IMR-90 (cell line): ENCODE measurements at regions of chr15 and their contacts with region 1.

Region 1: DNA sequence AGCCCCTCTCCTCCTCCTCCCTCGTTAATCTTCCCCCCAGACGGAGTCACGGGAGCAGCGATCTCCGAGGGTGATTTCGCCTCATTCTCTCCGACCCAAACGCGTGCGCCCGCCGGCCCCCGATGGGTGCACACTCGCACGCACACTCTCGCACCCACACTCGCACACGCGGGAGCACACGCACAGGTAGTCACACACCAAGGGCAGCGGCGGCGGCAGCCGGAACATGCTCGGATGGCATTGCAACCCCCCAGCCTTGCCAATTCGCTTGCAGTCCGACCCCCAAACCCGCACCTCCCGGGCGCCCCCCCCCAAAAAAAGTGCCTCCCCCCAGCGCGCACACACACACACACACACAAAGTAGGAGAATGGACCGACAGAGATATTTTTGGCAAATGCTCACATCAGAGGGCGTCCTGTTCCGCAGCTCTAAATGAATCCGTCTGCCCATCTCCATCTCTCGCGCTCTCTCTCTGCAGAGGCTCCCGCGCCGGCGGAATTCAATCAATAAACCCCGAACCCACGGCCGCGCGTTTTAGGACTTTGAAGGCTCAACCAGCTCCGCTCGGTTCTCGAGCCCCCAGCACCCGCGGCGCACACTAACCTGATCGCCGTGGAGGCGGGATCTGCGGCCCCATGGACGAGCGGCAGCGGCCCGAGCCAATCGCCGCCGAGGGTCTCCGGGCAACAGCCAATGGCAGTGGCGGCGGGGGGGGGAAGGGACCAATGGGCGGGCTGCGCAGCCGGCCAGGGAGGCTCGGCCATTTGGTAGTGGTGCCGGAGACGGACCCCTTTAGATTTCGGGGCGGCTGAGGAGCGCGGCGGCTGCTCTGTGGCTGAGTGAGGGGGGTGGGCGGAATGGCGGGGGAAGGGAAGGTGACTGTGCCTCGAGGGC is at the start of gene ANP32A:
- DNase-seq: peak; percentile 91
- ATAC-seq: peak; percentile 79
- H3K4me3 ChIP-seq: peak within 1 kb of the TSS; percentile 78
- H3K27ac ChIP-seq: peak within 1 kb of the TSS; percentile 87
- H3K4me1 ChIP-seq: peaks cover 9% of the 10 kb centered on the region
- H3K27me3 ChIP-seq: no peaks in the 10 kb centered on the region
- CTCF ChIP-seq: no peak
- POLR2A ChIP-seq: no peak
- RAD21 ChIP-seq: no peak
- total RNA-seq, gene ANP32A: 50.0 and 72.8 TPM in 2 replicates

Region 2: GRCh38 chr15:68783226-68784058 is 37.1 kb before region 1 on chr15:
- CTCF ChIA-PET with region 1: no interaction called
- POLR2A ChIA-PET with region 1: no interaction called
- dilution Hi-C with region 1: no loop called
- in situ Hi-C with region 1: no loop called
- intact Hi-C with region 1: loop called (anchors 5 kb)
- DNase-seq: no peak
- ATAC-seq: no peak
- H3K4me3 ChIP-seq: no peak overlapping the region
- H3K27ac ChIP-seq: no peak overlapping the region
- H3K4me1 ChIP-seq: no peaks in the 10 kb centered on the region
- H3K27me3 ChIP-seq: no peaks in the 10 kb centered on the region
- CTCF ChIP-seq: peak; percentile 48
- POLR2A ChIP-seq: no peak
- RAD21 ChIP-seq: peak; percentile 54

Region 3: DNA sequence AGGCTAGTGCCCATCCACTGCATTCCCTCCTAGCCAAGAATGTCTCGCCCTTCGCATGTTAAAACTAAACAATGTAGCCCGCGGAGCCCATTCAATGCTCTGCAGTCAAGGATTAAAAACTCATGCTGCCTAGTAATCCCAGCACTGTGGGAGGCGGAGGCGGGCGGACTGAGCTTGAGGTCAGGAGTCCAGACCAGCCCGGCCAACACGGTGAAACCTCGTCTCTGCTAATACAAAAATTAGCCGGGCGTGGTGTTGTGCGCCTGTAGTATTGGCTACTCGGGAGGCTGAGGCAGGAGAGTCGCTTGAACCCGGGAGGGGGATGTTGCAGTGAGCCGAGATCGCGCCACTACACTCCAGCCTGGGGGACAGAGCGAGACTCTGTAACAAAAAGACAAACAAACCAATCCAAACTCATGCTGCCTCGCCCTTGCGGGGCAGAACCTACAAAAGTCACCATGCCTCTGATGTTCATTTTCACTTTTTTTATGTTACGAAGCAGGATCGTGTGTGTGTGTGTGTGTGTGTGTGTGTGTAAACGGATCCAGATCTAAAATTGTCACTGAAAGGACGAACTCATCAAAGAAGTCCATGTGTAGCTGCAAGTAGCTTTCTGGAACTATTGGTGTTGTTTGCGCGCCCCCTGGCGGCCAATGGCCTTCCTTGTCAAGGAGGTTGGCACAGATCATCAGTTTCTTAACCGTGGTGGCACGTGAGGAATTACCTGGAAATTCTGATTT is 55.0 kb after region 1 on chr15:
- CTCF ChIA-PET with region 1: no interaction called
- POLR2A ChIA-PET with region 1: no interaction called
- dilution Hi-C with region 1: no loop called
- in situ Hi-C with region 1: no loop called
- intact Hi-C with region 1: loop called (anchors 1 kb)
- DNase-seq: peak; percentile 88
- ATAC-seq: peak; percentile 92
- H3K4me3 ChIP-seq: peak overlapping the region; percentile 28
- H3K27ac ChIP-seq: no peak overlapping the region
- H3K4me1 ChIP-seq: no peaks in the 10 kb centered on the region
- H3K27me3 ChIP-seq: peaks cover 24% of the 10 kb centered on the region
- CTCF ChIP-seq: peak; percentile 92
- POLR2A ChIP-seq: no peak
- RAD21 ChIP-seq: peak; percentile 96

Region 4: GRCh38 chr15:68921926-68922325 is 101.4 kb after region 1 on chr15:
- CTCF ChIA-PET with region 1: no interaction called
- POLR2A ChIA-PET with region 1: no interaction called
- dilution Hi-C with region 1: no loop called
- in situ Hi-C with region 1: no loop called
- intact Hi-C with region 1: no loop called
- DNase-seq: no peak
- ATAC-seq: no peak
- H3K4me3 ChIP-seq: no peak overlapping the region
- H3K27ac ChIP-seq: no peak overlapping the region
- H3K4me1 ChIP-seq: no peaks in the 10 kb centered on the region
- H3K27me3 ChIP-seq: peaks cover 12% of the 10 kb centered on the region
- CTCF ChIP-seq: no peak
- POLR2A ChIP-seq: no peak
- RAD21 ChIP-seq: no peak